ENCODE measurements at regions of chr19 and their contacts with region 1.

Region 1: DNA sequence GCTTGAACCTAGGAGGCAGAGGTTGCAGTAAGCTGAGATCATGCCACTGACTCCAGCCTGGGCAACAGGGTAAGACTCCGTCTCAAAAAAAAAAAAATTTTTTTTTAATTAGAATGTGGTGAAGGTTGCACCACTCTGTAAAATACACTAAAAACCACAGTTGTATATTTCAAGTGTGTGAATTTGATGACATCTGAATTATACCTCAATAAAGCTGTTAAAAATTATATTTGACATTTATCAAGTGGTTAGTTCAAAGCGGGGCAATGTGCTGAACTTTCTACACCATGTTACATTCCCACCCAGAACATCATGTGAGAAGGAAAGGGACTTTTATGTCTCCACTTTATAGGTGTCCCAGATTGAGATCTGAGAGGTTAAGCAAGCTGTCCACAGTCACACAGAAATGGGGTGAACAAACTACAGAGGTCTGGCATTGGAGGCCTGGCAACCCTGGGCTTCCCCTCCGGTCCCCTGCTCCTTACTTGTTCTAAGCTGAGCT is 5.9 kb upstream of the S1PR5 start:
- DNase-seq: peak; percentile 57 to 82
- ATAC-seq: peak; percentile 65 to 88 (median 80)
- H3K4me3 ChIP-seq: no peak overlapping the region
- H3K4me3 Mint-ChIP-seq: peak overlapping the region; percentile 76
- H3K27ac ChIP-seq: peak overlapping the region; percentile 92
- H3K27ac Mint-ChIP-seq: peak overlapping the region; percentile 86 to 91
- H3K4me1 ChIP-seq: peaks cover 65% of the 10 kb centered on the region
- H3K4me1 Mint-ChIP-seq: peaks cover 41 to 42% of the 10 kb centered on the region in 2 donors
- H3K27me3 ChIP-seq: no peaks in the 10 kb centered on the region
- H3K27me3 Mint-ChIP-seq: no peaks in the 10 kb centered on the region
- CTCF ChIP-seq: no peak

Region 2: GRCh38 chr19:10380313-10381102 is 142.7 kb before region 1 on chr19 and contains the start of gene TYK2:
- intact Hi-C with region 1: no loop called
- DNase-seq: peak; percentile 98 to 99
- ATAC-seq: peak; percentile 90 to 97 (median 92)
- H3K4me3 ChIP-seq: peak within 1 kb of the TSS; percentile 92
- H3K4me3 Mint-ChIP-seq: peak within 1 kb of the TSS; percentile 94
- H3K27ac ChIP-seq: peak within 1 kb of the TSS; percentile 93
- H3K27ac Mint-ChIP-seq: peak within 1 kb of the TSS; percentile 97
- H3K4me1 ChIP-seq: peaks cover 20% of the 10 kb centered on the region
- H3K4me1 Mint-ChIP-seq: peaks cover 19 to 26% of the 10 kb centered on the region in 2 donors
- H3K27me3 ChIP-seq: no peaks in the 10 kb centered on the region
- H3K27me3 Mint-ChIP-seq: no peaks in the 10 kb centered on the region
- CTCF ChIP-seq: no peak
- total RNA-seq, gene TYK2: 401 to 469 (median 454) TPM

Region 3: DNA sequence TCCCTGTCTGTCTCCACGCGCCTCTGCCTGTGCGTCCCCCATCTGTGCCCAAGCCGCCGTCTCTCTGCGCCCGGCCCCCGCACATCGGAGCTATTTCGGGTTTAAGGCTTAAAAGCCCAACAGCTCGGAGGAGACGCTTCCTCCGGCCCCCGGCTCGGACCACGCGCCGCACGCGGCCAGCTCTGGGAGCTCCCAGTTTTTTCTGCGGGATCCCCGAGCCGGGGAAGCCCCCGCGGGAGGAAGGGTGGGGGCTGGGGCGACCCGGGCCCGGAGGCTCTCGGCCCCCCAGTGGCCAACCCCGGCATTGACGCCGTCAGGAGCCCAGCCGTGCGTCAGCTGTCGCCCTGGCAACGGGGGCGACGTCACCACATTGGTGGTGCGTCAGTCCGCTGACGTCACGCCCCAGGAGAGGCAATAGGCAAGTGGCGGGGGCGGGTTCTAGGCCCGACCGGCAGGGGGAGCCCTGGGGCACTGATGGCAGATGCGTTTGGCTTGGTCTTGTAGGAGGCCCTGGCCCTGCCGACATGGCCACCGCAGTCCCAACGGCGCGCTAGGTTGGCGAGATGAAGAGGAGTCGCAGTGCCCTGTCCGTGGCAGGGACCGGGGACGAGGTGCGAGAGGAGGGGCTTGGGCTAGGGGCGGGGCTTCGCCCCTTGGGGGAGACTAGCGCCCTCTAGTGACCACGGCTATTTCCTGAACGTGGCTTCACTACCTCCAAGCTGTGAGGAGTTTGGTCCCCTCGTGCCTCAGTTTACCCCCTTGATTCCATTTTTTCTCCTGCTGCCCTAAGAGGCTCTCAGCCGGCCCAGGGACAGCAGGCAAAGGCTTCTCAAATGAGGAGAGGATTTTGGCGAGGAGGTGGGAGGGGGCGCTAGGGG is 106.6 kb before region 1 on chr19:
- intact Hi-C with region 1: loop called (anchors 2 kb)
- DNase-seq: peak; percentile 99 to 100
- ATAC-seq: peak; percentile 66 to 89 (median 76)
- H3K4me3 ChIP-seq: peak overlapping the region; percentile 48
- H3K4me3 Mint-ChIP-seq: peak overlapping the region; percentile 92
- H3K27ac ChIP-seq: peak overlapping the region; percentile 72
- H3K27ac Mint-ChIP-seq: peak overlapping the region; percentile 95 to 96
- H3K4me1 ChIP-seq: peaks cover 78% of the 10 kb centered on the region
- H3K4me1 Mint-ChIP-seq: peaks cover 46 to 61% of the 10 kb centered on the region in 2 donors
- H3K27me3 ChIP-seq: peaks cover 36% of the 10 kb centered on the region
- H3K27me3 Mint-ChIP-seq: peaks cover 13 to 29% of the 10 kb centered on the region in 2 donors
- CTCF ChIP-seq: peak; percentile 100

Region 4: DNA sequence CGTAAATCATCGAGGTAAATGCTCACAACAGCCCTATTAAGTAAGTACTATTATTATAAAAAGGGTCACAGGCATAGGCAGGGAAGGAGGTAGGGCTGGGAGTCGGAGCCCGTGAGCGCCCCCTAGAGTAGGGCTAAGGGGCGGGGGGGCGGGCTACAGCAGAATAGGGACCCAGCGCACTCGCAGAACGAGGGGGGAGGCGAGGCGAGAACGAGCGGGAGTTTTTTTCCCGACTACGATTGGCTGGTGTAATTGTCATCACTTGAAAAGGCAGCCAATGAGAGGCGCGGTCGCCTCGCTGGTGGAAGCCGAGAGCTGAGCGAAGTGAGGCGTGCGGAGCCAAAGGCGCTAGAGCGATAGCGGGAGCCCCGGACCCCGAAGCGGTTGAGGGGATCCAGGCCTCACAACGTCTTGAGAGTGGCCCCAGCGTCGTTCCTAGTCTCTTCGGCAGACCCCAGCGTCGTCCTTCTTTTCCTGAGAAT is 44.2 kb before region 1 on chr19:
- intact Hi-C with region 1: no loop called
- DNase-seq: peak; percentile 87 to 96
- ATAC-seq: peak; percentile 96 to 98 (median 97)
- H3K4me3 ChIP-seq: peak overlapping the region; percentile 8
- H3K4me3 Mint-ChIP-seq: peak overlapping the region; percentile 82
- H3K27ac ChIP-seq: no peak overlapping the region
- H3K27ac Mint-ChIP-seq: peak overlapping the region; percentile 85 to 92
- H3K4me1 ChIP-seq: peaks cover 21% of the 10 kb centered on the region
- H3K4me1 Mint-ChIP-seq: peaks cover 10% of the 10 kb centered on the region in 2 donors
- H3K27me3 ChIP-seq: no peaks in the 10 kb centered on the region
- H3K27me3 Mint-ChIP-seq: no peaks in the 10 kb centered on the region
- CTCF ChIP-seq: peak; percentile 85

Region 5: GRCh38 chr19:10502524-10503001 is 20.6 kb before region 1 on chr19:
- intact Hi-C with region 1: loop called (anchors 1 kb)
- DNase-seq: peak; percentile 91 to 92
- ATAC-seq: peak; percentile 82 to 95 (median 86)
- H3K4me3 ChIP-seq: peak overlapping the region; percentile 99
- H3K4me3 Mint-ChIP-seq: peak overlapping the region; percentile 88
- H3K27ac ChIP-seq: peak overlapping the region; percentile 98
- H3K27ac Mint-ChIP-seq: peak overlapping the region; percentile 84 to 96
- H3K4me1 ChIP-seq: peaks cover 61% of the 10 kb centered on the region
- H3K4me1 Mint-ChIP-seq: peaks cover 34 to 53% of the 10 kb centered on the region in 2 donors
- H3K27me3 ChIP-seq: no peaks in the 10 kb centered on the region
- H3K27me3 Mint-ChIP-seq: no peaks in the 10 kb centered on the region
- CTCF ChIP-seq: peak; percentile 30